ENCODE measurements at regions of chr4 and their contacts with region 1.

Region 1: GRCh38 chr4:105471566-105472176 is 2.2 kb downstream of the PPA2 start:
- DNase-seq: no peak
- ATAC-seq: peak; percentile 35
- H3K4me3 Mint-ChIP-seq: peak overlapping the region; percentile 59
- H3K27ac Mint-ChIP-seq: peak overlapping the region; percentile 13
- H3K4me1 Mint-ChIP-seq: peaks cover 37% of the 10 kb centered on the region
- H3K27me3 Mint-ChIP-seq: no peaks in the 10 kb centered on the region
- CTCF ChIP-seq: peak; percentile 38

Region 2: DNA sequence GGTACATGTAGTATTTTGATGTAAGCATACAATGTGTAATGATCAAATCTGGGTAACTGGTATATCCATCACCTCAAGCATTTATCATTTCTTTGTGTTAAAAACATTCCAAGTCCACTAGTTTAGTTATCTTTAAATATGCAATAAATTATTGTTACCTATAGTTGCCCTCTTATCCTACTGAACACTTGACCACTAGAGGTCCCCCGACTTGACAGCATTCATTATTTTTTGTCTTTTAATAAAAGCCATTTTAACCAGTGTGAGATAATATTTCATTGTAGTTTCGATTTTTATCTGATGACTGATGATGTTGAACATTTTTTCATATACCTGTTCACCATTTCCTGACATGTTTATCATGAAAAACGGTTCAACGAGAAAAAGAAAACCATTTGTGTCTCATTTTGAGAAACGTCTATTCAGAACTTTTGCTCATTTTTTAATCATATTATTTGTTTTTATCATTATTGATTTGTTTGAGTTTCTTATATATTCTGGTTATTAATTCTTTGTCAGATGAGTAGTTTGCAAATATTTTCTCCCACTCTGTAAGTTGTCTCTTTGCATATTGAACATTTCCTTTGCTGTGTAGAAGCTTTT is 778.0 kb before region 1 on chr4:
- CTCF ChIA-PET with region 1: no interaction called
- POLR2A ChIA-PET with region 1: no interaction called
- intact Hi-C with region 1: loop called (anchors 5 kb)
- DNase-seq: no peak
- ATAC-seq: no peak
- H3K4me3 Mint-ChIP-seq: no peak overlapping the region
- H3K27ac Mint-ChIP-seq: no peak overlapping the region
- H3K4me1 Mint-ChIP-seq: no peaks in the 10 kb centered on the region
- H3K27me3 Mint-ChIP-seq: no peaks in the 10 kb centered on the region
- CTCF ChIP-seq: no peak

Region 3: GRCh38 chr4:104930298-104930697 is 541.4 kb before region 1 on chr4:
- CTCF ChIA-PET with region 1: interaction called, 7 read pairs
- POLR2A ChIA-PET with region 1: interaction called, 9 read pairs
- intact Hi-C with region 1: loop called (anchors 1 kb)
- DNase-seq: no peak
- ATAC-seq: no peak
- H3K4me3 Mint-ChIP-seq: no peak overlapping the region
- H3K27ac Mint-ChIP-seq: peak overlapping the region; percentile 63
- H3K4me1 Mint-ChIP-seq: peaks cover 27% of the 10 kb centered on the region
- H3K27me3 Mint-ChIP-seq: no peaks in the 10 kb centered on the region
- CTCF ChIP-seq: no peak

Region 4: GRCh38 chr4:105140684-105141490 is 330.8 kb before region 1 on chr4:
- CTCF ChIA-PET with region 1: interaction called, 33 read pairs
- POLR2A ChIA-PET with region 1: interaction called, 25 read pairs
- intact Hi-C with region 1: loop called (anchors 1 kb)
- DNase-seq: no peak
- ATAC-seq: peak; percentile 28
- H3K4me3 Mint-ChIP-seq: no peak overlapping the region
- H3K27ac Mint-ChIP-seq: no peak overlapping the region
- H3K4me1 Mint-ChIP-seq: peaks cover 16% of the 10 kb centered on the region
- H3K27me3 Mint-ChIP-seq: no peaks in the 10 kb centered on the region
- CTCF ChIP-seq: no peak

Region 5: GRCh38 chr4:105306158-105306781 is 165.4 kb before region 1 on chr4:
- CTCF ChIA-PET with region 1: no interaction called
- POLR2A ChIA-PET with region 1: interaction called, 7 read pairs
- intact Hi-C with region 1: loop called (anchors 1 kb)
- DNase-seq: no peak
- ATAC-seq: peak; percentile 93
- H3K4me3 Mint-ChIP-seq: peak overlapping the region; percentile 74
- H3K27ac Mint-ChIP-seq: peak overlapping the region; percentile 90
- H3K4me1 Mint-ChIP-seq: peaks cover 22% of the 10 kb centered on the region
- H3K27me3 Mint-ChIP-seq: no peaks in the 10 kb centered on the region
- CTCF ChIP-seq: no peak

Region 6: DNA sequence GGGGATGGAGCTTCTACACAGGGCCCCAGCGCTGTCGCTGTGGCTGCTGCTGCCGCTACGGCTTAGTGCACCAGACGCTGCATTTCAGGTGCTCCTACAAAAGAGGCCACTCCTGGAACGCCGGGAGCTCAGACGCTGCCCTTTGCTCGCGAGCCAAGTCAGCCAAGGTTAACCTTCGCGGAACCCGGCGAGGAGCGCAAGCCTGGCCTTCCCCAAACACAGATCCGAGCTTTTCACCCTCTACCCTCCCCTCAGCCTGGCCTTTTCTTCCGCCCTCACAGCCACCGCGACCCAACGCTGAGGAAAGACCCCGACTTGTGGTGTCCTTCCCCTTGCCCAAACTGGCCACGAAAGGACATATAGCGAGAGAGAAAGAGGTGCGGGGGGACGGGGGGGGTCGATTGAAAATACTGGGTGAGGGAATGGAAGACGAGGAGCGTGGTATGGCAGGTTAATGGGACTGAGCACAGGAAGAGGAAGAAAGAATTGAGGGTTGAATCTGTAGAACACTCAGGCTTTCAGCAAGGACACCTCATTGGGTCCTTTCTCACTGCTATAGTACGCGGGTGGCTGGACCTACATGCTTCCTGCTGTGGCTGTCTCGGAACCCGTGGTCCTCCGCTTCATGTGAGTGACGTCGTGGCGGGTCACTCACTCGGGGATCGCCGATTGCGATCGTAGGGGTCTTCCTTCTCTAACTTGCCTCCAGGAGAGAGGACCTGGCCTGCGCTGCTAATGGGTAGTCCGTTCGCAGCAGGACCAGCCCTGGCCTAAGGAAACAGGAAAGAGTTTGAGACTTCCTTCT is 844.5 kb after region 1 on chr4 and contains the starts of genes AIMP1 and TBCK:
- CTCF ChIA-PET with region 1: no interaction called
- POLR2A ChIA-PET with region 1: no interaction called
- intact Hi-C with region 1: loop called (anchors 1 kb)
- DNase-seq: peak; percentile 78
- ATAC-seq: peak; percentile 90
- H3K4me3 Mint-ChIP-seq: no peak within 1 kb of the TSS
- H3K27ac Mint-ChIP-seq: no peak within 1 kb of the TSS
- H3K4me1 Mint-ChIP-seq: peaks cover 35% of the 10 kb centered on the region
- H3K27me3 Mint-ChIP-seq: no peaks in the 10 kb centered on the region
- CTCF ChIP-seq: no peak
- total RNA-seq, gene AIMP1: 49.4 and 53.5 TPM in 2 replicates
- total RNA-seq, gene TBCK: 45.6 and 60.1 TPM in 2 replicates